Heart right ventricle (tissue), 16 donors: ENCODE measurements at regions of chr9 and their contacts with region 1.

Region 1: DNA sequence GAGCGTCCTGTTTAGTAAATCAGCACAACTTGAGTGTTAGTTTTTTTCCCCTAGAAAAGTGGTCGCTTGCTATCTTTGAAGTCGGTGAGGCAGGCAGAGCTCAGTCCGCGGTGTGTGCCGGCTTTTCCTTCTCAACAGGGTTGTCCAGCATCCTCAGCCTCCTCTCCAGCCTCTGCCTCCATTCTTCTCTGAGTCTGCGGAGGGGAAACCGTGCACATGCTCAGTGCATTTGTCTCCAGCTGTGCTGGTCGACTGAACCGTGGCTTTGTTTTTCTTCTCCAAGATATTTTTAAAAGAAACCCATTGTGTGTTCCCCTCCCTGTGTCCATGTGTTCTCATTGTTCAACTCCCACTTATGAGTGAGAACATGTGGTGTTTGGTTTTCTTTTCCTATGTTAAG is 25.3 kb downstream of the FAM240B start:
- DNase-seq: no peak
- ATAC-seq: no peak
- H3K4me3 ChIP-seq: no peak overlapping the region
- H3K27ac ChIP-seq: no peak overlapping the region
- H3K4me1 ChIP-seq: no peaks in the 10 kb centered on the region
- H3K27me3 ChIP-seq: no peaks in the 10 kb centered on the region
- CTCF ChIP-seq: no peak

Region 2: GRCh38 chr9:37852222-37852621 is 842.5 kb before region 1 on chr9:
- intact Hi-C with region 1: loop called in 1 of 10 experiments (anchors 5 kb)
- DNase-seq: no peak
- ATAC-seq: no peak
- H3K4me3 ChIP-seq: no peak overlapping the region
- H3K27ac ChIP-seq: no peak overlapping the region
- H3K4me1 ChIP-seq: no peaks in the 10 kb centered on the region
- H3K27me3 ChIP-seq: no peaks in the 10 kb centered on the region
- CTCF ChIP-seq: no peak

Region 3: GRCh38 chr9:38172585-38172984 is 522.1 kb before region 1 on chr9:
- intact Hi-C with region 1: no loop called
- DNase-seq: no peak
- ATAC-seq: peak in 3 of 8 donors; percentile 42 to 52 (median 47)
- H3K4me3 ChIP-seq: no peak overlapping the region
- H3K27ac ChIP-seq: peak overlapping the region in 4 of 10 donors; percentile 7 to 49 (median 30)
- H3K4me1 ChIP-seq: peaks cover 0 to 21% (median 11%) of the 10 kb centered on the region in 9 donors
- H3K27me3 ChIP-seq: no peaks in the 10 kb centered on the region
- CTCF ChIP-seq: no peak

Region 4: DNA sequence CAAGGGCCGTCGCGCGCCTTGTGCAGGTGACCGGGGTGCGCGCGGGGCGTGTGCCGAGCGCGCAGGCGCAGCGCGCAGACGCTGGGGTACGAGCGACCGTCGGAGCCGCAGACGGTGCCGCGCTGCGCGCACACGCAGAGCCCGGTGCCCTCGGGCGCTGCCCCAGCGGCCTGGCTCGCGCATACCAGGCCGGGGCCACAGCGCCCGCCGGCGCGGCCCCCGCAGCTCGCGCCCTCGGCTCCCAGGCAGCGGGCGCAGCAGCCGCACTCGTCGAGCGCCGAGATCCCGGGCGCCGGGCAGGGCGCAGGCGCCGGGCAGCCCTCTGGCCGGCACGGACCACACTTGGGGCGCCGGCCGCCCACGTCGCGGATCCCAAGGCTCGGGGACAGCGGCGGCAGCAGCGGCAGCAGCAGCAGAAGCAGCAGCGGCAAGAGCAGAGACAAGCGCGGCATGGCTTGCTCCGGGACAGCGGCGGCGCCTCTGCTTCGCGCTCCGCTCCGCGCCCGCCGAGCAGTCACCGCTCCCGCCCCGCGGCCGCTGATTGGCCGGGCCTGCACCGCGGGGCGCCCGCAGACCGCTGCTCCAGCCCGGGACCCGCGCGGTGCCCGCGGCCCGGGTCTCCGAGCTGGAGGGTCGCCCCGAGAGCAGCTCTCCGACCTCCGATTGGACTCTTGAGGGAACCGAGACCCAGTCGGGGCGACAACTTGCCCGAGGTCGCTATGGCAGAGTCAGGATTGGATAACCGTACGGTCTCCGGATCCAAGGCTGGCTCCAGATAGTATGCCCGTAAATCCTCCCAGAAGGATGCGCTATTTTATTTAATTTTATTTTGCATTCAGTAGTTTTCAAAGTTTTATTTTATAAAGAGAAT is 270.5 kb before region 1 on chr9 and contains the start of gene IGFBPL1:
- intact Hi-C with region 1: no loop called
- DNase-seq: no peak
- ATAC-seq: peak in 6 of 8 donors; percentile 55 to 74 (median 63)
- H3K4me3 ChIP-seq: peak within 1 kb of the TSS in 8 of 10 donors; percentile 5 to 37 (median 28)
- H3K27ac ChIP-seq: no peak within 1 kb of the TSS
- H3K4me1 ChIP-seq: peaks cover 0 to 6% (median 0%) of the 10 kb centered on the region in 9 donors
- H3K27me3 ChIP-seq: peaks cover 0 to 72% (median 65%) of the 10 kb centered on the region in 7 donors
- CTCF ChIP-seq: no peak
- total RNA-seq, gene IGFBPL1: not detected

Region 5: GRCh38 chr9:38467404-38467803 is 227.3 kb before region 1 on chr9:
- intact Hi-C with region 1: no loop called
- DNase-seq: no peak
- ATAC-seq: no peak
- H3K4me3 ChIP-seq: no peak overlapping the region
- H3K27ac ChIP-seq: no peak overlapping the region
- H3K4me1 ChIP-seq: no peaks in the 10 kb centered on the region
- H3K27me3 ChIP-seq: peaks cover 0 to 42% (median 20%) of the 10 kb centered on the region in 7 donors
- CTCF ChIP-seq: no peak